ENCODE measurements at regions of chr18 and their contacts with region 1.

Region 1: GRCh38 chr18:2536493-2536892 is 34.8 kb downstream of the METTL4 start:
- DNase-seq: no peak

Region 2: GRCh38 chr18:2104620-2105462 is 431.7 kb before region 1 on chr18:
- intact Hi-C with region 1: loop called (anchors 10 kb)
- DNase-seq: peak in 36 of 42 donors; percentile 11 to 80 (median 54)

Measured in head of caudate nucleus (tissue), 42 donors.